ENCODE measurements at regions of chr13 and their contacts with region 1.

Region 1: GRCh38 chr13:78875792-78876580 is 217.0 kb upstream of the OBI1 start:
- DNase-seq: no peak
- ATAC-seq: peak; percentile 97
- H3K4me3 ChIP-seq: no peak overlapping the region
- H3K27ac ChIP-seq: no peak overlapping the region
- H3K4me1 ChIP-seq: no peaks in the 10 kb centered on the region
- H3K27me3 ChIP-seq: no peaks in the 10 kb centered on the region
- CTCF ChIP-seq: peak in 2 of 3 experiments; percentile 25 to 38; a peak in 2 of 6 replicates
- EP300 ChIP-seq: no peak
- POLR2A ChIP-seq: no peak
- RAD21 ChIP-seq: peak; percentile 48

Region 2: DNA sequence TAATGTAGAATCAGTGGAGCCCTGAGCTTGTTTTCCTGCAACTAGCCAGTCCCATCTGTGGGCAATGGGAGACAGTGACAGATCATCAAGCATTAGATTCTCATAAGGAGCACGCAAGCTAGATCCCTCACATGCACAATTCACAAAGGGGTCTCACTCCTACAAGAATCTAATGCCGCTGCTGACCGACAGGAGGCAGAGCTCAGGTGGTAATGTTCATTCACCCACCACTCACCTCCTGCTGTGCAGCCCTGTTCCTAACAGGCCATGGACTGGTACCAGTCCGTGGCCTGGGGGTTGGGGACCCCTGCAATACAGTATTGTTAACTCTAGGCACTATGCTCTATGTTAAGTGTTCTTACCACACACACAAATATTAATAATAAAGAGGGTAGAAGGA is 167.2 kb after region 1 on chr13:
- CTCF ChIA-PET with region 1: interaction called, 4 read pairs
- POLR2A ChIA-PET with region 1: no interaction called
- RAD21 ChIA-PET with region 1: no interaction called
- SMC1A ChIA-PET with region 1: no interaction called
- in situ Hi-C with region 1: no loop called
- intact Hi-C with region 1: loop called (anchors 2 kb)
- DNase-seq: no peak
- ATAC-seq: no peak
- H3K4me3 ChIP-seq: no peak overlapping the region
- H3K27ac ChIP-seq: no peak overlapping the region
- H3K4me1 ChIP-seq: no peaks in the 10 kb centered on the region
- H3K27me3 ChIP-seq: no peaks in the 10 kb centered on the region
- CTCF ChIP-seq: no peak
- EP300 ChIP-seq: no peak
- POLR2A ChIP-seq: no peak
- RAD21 ChIP-seq: no peak